Activated CD4-positive, alpha-beta memory T cell treated with anti-CD3 and anti-CD28 coated beads, Interleukin-2, amount 10 ng/mL, durations not matched to agents 7 days and 5 days (primary cell): ENCODE measurements at regions of chr16 and their contacts with region 1.

Region 1: GRCh38 chr16:28924732-28925385 is at the start of gene RABEP2:
- DNase-seq: peak; percentile 95
- H3K4me3 Mint-ChIP-seq: peak within 1 kb of the TSS; percentile 97
- H3K27ac Mint-ChIP-seq: peak within 1 kb of the TSS; percentile 95
- H3K4me1 Mint-ChIP-seq: peaks cover 20% of the 10 kb centered on the region
- H3K27me3 Mint-ChIP-seq: no peaks in the 10 kb centered on the region
- total RNA-seq, gene RABEP2: 15.7 to 16.5 TPM

Region 2: GRCh38 chr16:28902909-28903308 is 21.9 kb before region 1 on chr16:
- CTCF ChIA-PET with region 1: no interaction called
- POLR2A ChIA-PET with region 1: no interaction called
- DNase-seq: no peak
- H3K4me3 Mint-ChIP-seq: no peak overlapping the region
- H3K27ac Mint-ChIP-seq: no peak overlapping the region
- H3K4me1 Mint-ChIP-seq: no peaks in the 10 kb centered on the region
- H3K27me3 Mint-ChIP-seq: no peaks in the 10 kb centered on the region

Region 3: GRCh38 chr16:28935924-28936783 is 11.3 kb after region 1 on chr16:
- CTCF ChIA-PET with region 1: interaction called, 6 read pairs
- POLR2A ChIA-PET with region 1: interaction called, 12 read pairs
- DNase-seq: peak; percentile 85
- H3K4me3 Mint-ChIP-seq: peak overlapping the region; percentile 58
- H3K27ac Mint-ChIP-seq: no peak overlapping the region
- H3K4me1 Mint-ChIP-seq: peaks cover 16% of the 10 kb centered on the region
- H3K27me3 Mint-ChIP-seq: peaks cover 2% of the 10 kb centered on the region